Sciatic nerve (tissue), 2 donors: ENCODE measurements at regions of chr1 and their contacts with region 1.

Region 1: GRCh38 chr1:37020653-37021277 is 13.6 kb downstream of the GRIK3 start:
- DNase-seq: no peak
- ATAC-seq: no peak

Region 2: DNA sequence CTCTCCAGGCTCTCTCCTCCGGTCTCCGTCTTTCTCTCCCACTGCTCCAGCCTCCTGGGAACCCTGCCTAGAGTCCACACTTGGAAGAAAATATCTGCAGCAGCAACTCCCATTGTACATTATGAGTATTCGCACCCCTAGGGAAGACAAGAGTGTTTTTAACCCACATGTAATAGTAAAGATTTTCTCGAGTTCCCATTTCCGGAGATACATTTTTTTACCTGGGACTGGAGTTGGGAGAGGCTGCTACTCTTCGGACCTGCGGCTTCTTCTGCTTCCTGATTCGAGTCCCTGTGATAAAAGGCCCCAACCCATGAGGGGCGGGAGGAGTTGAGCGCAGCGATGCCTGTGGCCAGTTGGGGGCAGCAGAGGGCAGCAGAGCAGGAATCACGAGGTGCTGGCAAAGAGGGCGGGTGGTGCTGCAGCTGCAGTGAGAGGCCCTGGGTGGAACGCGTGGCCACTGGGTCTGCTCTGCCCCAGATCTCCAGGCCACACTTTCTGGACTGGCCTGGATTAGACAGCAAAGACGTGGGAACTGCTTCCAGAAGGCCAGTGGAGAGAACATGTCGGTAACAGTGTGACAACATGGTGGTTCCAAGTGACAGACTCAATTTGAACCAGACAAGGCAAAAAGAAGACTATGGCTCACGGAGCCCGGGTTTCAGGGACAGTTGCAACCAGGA is 317.1 kb before region 1 on chr1:
- intact Hi-C with region 1: loop called (anchors 10 kb)
- DNase-seq: peak; percentile 86
- ATAC-seq: peak; percentile 90